Posterior vena cava (tissue), 2 donors: ENCODE measurements at regions of chr12 and their contacts with region 1.

Region 1: DNA sequence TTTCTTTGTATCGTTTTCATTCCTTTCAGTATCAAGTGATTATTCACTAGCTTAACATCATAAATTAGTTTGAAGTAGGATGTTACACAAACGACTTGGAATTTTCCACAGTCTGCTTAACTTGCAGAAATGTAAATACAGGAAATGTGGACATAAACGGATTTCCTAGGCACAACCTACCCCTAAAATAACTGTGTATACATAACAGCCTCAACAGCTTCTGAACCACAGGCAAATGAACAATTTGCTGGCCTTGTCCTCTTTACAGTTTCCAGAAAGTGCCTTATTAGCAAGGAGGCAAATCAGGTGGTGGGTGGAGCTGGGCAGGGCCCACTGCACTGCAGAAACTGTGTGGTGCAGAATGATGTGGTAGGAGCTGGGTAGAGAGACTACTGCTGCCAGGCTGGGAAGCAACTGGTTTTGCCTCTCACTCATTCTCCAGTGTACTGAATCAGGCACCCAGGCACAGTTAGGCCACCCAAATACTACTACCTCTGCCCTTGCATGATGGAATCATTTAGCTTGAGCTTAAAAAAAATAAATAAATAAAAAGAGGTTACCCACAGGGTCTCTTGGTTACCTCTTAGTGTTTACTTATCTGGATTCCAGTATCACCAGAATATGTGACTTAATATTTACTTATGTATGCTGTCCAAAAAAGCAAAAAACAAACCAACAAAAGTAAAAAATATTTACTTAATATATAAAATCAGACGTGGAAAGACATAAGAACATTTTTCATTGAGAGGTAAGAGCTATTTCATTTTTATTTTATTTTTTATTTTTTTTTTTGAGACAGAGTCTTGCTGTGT is 14.3 kb downstream of the DRAM1 start:
- DNase-seq: no peak

Region 2: DNA sequence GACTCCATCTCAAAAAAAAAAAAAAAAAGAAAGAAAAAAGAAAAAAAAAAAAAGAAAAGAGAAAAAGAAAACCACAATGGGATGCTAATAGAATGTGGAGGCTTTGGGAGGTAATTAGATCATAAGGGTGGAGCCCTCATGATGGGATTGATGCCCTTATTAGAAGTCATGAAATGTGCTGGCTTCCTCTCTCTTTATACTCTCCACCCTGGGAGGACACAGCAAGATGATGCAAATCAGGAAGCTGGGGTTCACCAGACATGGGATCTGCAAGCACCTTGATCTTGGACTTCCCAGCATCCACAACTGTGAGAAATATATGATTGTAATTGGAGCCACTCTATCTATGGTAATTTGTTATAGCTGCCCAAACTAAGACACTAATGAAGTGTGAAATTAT is 27.7 kb before region 1 on chr12:
- intact Hi-C with region 1: loop called in 1 of 2 experiments (anchors 2 kb)
- DNase-seq: no peak

Region 3: GRCh38 chr12:101919447-101919846 is 27.8 kb after region 1 on chr12:
- intact Hi-C with region 1: no loop called
- DNase-seq: no peak